ENCODE measurements at regions of chr11 and their contacts with region 1.

Region 1: GRCh38 chr11:68584097-68584496 is 100.2 kb upstream of the GAL start:
- DNase-seq: peak; percentile 56 to 94
- H3K4me3 ChIP-seq: no peak overlapping the region
- H3K27ac ChIP-seq: no peak overlapping the region
- H3K4me1 ChIP-seq: no peaks in the 10 kb centered on the region
- H3K27me3 ChIP-seq: no peaks in the 10 kb centered on the region
- CTCF ChIP-seq: peak; percentile 78 to 96 (median 91)
- EP300 ChIP-seq: no peak
- POLR2A ChIP-seq: no peak
- RAD21 ChIP-seq: peak; percentile 72

Region 2: GRCh38 chr11:68560216-68560615 is 23.9 kb before region 1 on chr11:
- CTCF ChIA-PET with region 1: interaction called, 13 read pairs
- POLR2A ChIA-PET with region 1: no interaction called
- DNase-seq: no peak
- H3K4me3 ChIP-seq: no peak overlapping the region
- H3K27ac ChIP-seq: no peak overlapping the region
- H3K4me1 ChIP-seq: no peaks in the 10 kb centered on the region
- H3K27me3 ChIP-seq: no peaks in the 10 kb centered on the region
- CTCF ChIP-seq: no peak
- EP300 ChIP-seq: no peak
- POLR2A ChIP-seq: no peak
- RAD21 ChIP-seq: no peak

Region 3: GRCh38 chr11:68569357-68569756 is 14.7 kb before region 1 on chr11:
- CTCF ChIA-PET with region 1: interaction called, 28 read pairs
- POLR2A ChIA-PET with region 1: interaction called, 4 read pairs
- DNase-seq: no peak
- H3K4me3 ChIP-seq: no peak overlapping the region
- H3K27ac ChIP-seq: no peak overlapping the region
- H3K4me1 ChIP-seq: no peaks in the 10 kb centered on the region; a peak in 1 of 7 replicates
- H3K27me3 ChIP-seq: no peaks in the 10 kb centered on the region
- CTCF ChIP-seq: no peak
- EP300 ChIP-seq: no peak
- POLR2A ChIP-seq: no peak
- RAD21 ChIP-seq: no peak

Region 4: GRCh38 chr11:68601147-68601546 is 17.1 kb after region 1 on chr11:
- CTCF ChIA-PET with region 1: interaction called, 10 read pairs
- POLR2A ChIA-PET with region 1: no interaction called
- DNase-seq: no peak
- H3K4me3 ChIP-seq: no peak overlapping the region
- H3K27ac ChIP-seq: no peak overlapping the region
- H3K4me1 ChIP-seq: no peaks in the 10 kb centered on the region
- H3K27me3 ChIP-seq: no peaks in the 10 kb centered on the region; a peak in 1 of 7 replicates
- CTCF ChIP-seq: no peak
- EP300 ChIP-seq: no peak
- POLR2A ChIP-seq: no peak
- RAD21 ChIP-seq: no peak

Region 5: GRCh38 chr11:68610452-68611116 is 26.5 kb after region 1 on chr11:
- CTCF ChIA-PET with region 1: interaction called, 12 read pairs
- POLR2A ChIA-PET with region 1: interaction called, 3 read pairs
- DNase-seq: no peak
- H3K4me3 ChIP-seq: no peak overlapping the region
- H3K27ac ChIP-seq: no peak overlapping the region
- H3K4me1 ChIP-seq: no peaks in the 10 kb centered on the region
- H3K27me3 ChIP-seq: no peaks in the 10 kb centered on the region
- CTCF ChIP-seq: peak in 1 of 3 experiments; percentile 19; a peak in 1 of 4 replicates
- EP300 ChIP-seq: no peak
- POLR2A ChIP-seq: no peak
- RAD21 ChIP-seq: peak; percentile 44 to 57

Region 6: DNA sequence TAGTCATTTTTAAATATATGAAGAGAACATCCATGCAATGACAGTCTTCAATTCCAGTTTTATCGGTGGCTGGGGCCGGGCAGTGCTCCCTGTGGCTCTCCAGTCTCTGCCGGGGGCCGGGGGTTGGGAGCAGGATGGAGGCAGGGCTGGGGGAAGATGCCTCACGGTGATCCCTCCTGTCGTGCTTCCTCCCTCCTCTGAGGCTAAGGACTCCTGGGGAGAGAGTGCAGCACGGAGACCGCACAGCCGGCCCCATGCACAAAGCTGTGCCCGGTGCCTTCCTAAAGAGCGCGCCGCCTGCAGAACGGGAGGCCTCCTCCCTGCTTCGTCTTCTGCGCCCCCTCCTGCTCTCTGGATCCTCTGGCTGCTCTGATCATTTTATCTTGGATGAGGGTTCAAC is 120.8 kb after region 1 on chr11:
- CTCF ChIA-PET with region 1: no interaction called
- POLR2A ChIA-PET with region 1: no interaction called
- DNase-seq: peak in 1 of 2 experiments; percentile 34
- H3K4me3 ChIP-seq: peak overlapping the region in 1 of 4 experiments; percentile 41; a peak in 4 of 8 replicates
- H3K27ac ChIP-seq: no peak overlapping the region
- H3K4me1 ChIP-seq: peaks cover 6 to 14% (median 9%) of the 10 kb centered on the region in 4 experiments
- H3K27me3 ChIP-seq: no peaks in the 10 kb centered on the region; a peak in 1 of 7 replicates
- CTCF ChIP-seq: peak; percentile 13 to 32 (median 18); a peak in 3 of 4 replicates
- EP300 ChIP-seq: no peak; a peak in 1 of 3 replicates
- POLR2A ChIP-seq: no peak
- RAD21 ChIP-seq: peak in 1 of 2 experiments; percentile 9; a peak in 1 of 4 replicates

Region 7: GRCh38 chr11:69000831-69001242 is 416.7 kb after region 1 on chr11:
- CTCF ChIA-PET with region 1: no interaction called
- POLR2A ChIA-PET with region 1: no interaction called
- DNase-seq: no peak
- H3K4me3 ChIP-seq: no peak overlapping the region; a peak in 1 of 8 replicates
- H3K27ac ChIP-seq: no peak overlapping the region
- H3K4me1 ChIP-seq: peaks cover 0 to 2% (median 1%) of the 10 kb centered on the region in 4 experiments; a peak in 2 of 7 replicates
- H3K27me3 ChIP-seq: no peaks in the 10 kb centered on the region
- CTCF ChIP-seq: peak in 2 of 3 experiments; percentile 28 to 42; a peak in 2 of 4 replicates
- EP300 ChIP-seq: no peak
- POLR2A ChIP-seq: no peak
- RAD21 ChIP-seq: peak in 1 of 2 experiments; percentile 21; a peak in 2 of 4 replicates